Activated naive CD4-positive, alpha-beta T cell treated with anti-CD3 and anti-CD28 coated beads for 36 hours (primary cell): ENCODE measurements at regions of chr7 and their contacts with region 1.

Region 1: GRCh38 chr7:1137510-1138167 is 22.4 kb downstream of the ZFAND2A start:
- DNase-seq: no peak
- H3K4me3 Mint-ChIP-seq: peak overlapping the region; percentile 84
- H3K27ac Mint-ChIP-seq: peak overlapping the region; percentile 42
- H3K4me1 Mint-ChIP-seq: peaks cover 20% of the 10 kb centered on the region
- H3K27me3 Mint-ChIP-seq: no peaks in the 10 kb centered on the region

Region 2: DNA sequence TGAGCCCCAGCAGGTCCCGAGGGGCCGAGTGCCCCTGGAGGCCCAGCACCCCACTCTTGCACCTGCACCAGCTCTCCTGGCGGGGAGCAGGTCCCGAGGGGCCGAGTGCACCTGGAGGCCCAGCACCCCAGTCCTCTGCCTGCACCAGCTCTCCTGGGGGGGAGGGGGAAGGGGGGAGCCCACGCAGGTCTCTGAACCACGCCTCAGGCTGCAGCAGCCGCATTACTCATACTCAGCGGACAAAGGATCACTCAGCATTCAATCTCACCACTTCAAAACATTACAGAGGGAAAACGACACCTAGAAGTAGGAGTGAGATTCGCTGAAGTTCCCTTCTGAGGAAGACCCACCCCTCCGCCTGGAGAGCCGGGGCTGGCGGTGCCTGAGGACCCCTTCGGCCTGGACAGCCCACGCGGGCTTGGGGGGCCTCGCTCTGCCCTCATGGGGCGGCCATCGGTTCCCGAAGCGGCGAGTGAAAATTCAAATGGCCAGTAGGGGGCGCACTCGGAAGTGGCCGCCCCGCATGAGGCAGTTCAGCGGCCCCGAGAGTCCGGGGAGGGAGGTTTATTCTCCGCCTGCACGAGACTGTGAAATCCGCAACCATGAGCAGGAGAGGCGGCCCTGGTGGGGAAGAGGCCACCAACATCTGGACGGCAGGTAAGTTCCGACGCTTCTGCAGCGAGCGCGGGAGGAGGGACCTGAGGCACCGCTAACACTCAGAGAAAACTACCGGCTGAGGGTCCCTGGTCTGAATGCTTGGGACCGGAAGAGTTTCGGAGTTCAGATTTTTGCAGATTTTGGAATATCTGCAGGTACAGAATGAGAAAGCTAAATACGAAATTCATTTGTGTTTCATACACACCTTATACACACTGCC is 50.8 kb before region 1 on chr7:
- CTCF ChIA-PET with region 1: interaction called, 4 read pairs
- intact Hi-C with region 1: loop called (anchors 2 kb)
- DNase-seq: peak; percentile 80
- H3K4me3 Mint-ChIP-seq: peak overlapping the region; percentile 38
- H3K27ac Mint-ChIP-seq: no peak overlapping the region
- H3K4me1 Mint-ChIP-seq: peaks cover 12% of the 10 kb centered on the region
- H3K27me3 Mint-ChIP-seq: no peaks in the 10 kb centered on the region

Region 3: GRCh38 chr7:1159891-1160668 is 22.4 kb after region 1 on chr7 and contains the start of gene ZFAND2A:
- CTCF ChIA-PET with region 1: interaction called, 7 read pairs
- intact Hi-C with region 1: loop called (anchors 1 kb)
- DNase-seq: peak; percentile 99
- H3K4me3 Mint-ChIP-seq: peak within 1 kb of the TSS; percentile 86
- H3K27ac Mint-ChIP-seq: peak within 1 kb of the TSS; percentile 78
- H3K4me1 Mint-ChIP-seq: peaks cover 29% of the 10 kb centered on the region
- H3K27me3 Mint-ChIP-seq: no peaks in the 10 kb centered on the region
- total RNA-seq, gene ZFAND2A: 19.1 to 20.7 TPM

Region 4: DNA sequence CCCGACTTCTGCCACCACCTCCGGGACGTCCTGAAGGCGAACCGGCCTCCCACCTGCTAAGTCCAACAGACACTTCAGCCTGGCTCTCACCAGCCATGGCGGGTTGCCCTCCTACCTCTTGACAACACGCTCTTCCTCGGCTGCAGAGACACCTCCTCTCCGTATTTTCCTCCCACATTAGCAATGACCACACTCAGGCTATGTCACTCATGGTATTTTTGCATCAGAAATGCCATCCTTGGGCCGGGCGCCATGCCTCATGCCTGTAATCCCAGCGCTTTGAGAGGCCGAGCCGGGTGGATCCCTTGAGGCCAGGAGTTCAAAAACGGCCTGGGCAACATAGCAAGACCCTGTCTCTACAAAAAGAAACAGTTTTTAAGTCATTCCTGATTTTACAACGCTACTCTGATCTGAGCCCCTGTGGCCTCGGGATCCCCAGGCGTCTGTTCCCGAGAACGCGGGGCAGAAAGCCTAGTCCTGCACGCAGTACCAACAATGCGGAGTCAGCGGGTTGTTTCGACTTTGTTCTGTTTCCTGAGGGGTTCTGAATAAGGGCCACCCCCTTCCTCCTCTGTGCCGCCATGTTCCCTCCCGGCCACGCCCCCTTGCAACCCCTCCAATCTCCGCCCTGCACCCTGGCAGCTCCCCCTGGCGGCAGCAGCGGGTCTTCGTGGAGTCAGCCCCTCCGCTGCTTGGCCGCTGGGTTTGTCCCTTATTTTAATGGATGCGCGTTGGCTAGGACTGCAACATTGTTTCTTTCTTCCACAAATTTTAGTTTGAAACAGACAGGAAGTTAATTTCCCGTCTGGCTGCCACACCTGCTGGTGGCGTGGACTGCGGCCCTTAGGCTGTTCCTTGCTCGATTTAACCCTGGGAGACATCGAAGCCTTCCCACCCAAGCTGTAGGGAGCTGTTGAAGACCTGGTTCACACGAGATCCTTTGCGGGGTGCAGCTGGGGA is 32.0 kb after region 1 on chr7:
- CTCF ChIA-PET with region 1: interaction called, 3 read pairs
- intact Hi-C with region 1: loop called (anchors 2 kb)
- DNase-seq: peak; percentile 99
- H3K4me3 Mint-ChIP-seq: peak overlapping the region; percentile 88
- H3K27ac Mint-ChIP-seq: peak overlapping the region; percentile 92
- H3K4me1 Mint-ChIP-seq: peaks cover 13% of the 10 kb centered on the region
- H3K27me3 Mint-ChIP-seq: no peaks in the 10 kb centered on the region

Region 5: DNA sequence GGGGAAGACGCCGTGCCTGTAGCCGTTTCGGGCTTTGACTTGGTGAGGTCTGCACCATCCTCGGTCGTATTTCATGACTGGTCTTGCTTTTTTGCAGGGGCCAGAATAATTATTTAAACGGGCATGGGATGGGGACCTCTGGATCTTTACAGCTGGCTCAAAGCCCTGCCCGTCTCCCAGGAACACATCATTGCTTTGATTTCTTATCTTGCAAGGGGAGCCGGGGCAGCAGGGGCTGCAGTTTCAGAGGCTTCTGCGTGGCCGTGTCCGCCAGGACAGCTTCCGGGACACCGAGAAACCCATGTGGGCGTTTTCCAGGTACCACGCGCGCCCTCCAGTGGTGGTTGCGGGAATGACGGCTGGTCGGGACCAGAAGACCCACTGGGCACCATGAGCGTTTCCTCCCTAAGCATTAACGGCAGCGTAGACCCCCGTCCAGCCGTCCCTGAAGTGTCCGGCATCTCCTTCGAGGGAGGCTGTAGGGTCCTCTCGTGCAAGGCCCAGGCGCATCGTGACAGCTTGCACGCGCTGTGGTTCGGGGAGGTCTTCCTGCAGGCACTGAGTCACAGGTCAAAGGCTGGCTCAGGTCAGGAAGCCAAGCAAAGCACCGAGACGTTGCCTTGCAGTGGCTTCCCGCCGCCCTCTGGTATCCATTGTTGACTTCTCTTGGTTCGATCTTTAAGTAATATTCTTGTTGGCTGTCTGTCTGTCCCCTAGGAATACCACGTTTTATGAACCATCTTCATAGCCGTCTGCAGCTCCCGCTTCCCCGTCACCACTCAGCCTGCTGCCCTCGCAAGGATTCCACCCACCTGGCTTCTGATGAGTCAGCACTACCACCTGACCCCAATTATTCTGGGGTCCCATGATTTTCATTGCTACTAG is 38.6 kb after region 1 on chr7:
- CTCF ChIA-PET with region 1: interaction called, 11 read pairs
- intact Hi-C with region 1: loop called (anchors 2 kb)
- DNase-seq: peak; percentile 90
- H3K4me3 Mint-ChIP-seq: peak overlapping the region; percentile 60
- H3K27ac Mint-ChIP-seq: no peak overlapping the region
- H3K4me1 Mint-ChIP-seq: peaks cover 11% of the 10 kb centered on the region
- H3K27me3 Mint-ChIP-seq: peaks cover 10% of the 10 kb centered on the region